ENCODE measurements at regions of chr6 and their contacts with region 1.

Region 1: DNA sequence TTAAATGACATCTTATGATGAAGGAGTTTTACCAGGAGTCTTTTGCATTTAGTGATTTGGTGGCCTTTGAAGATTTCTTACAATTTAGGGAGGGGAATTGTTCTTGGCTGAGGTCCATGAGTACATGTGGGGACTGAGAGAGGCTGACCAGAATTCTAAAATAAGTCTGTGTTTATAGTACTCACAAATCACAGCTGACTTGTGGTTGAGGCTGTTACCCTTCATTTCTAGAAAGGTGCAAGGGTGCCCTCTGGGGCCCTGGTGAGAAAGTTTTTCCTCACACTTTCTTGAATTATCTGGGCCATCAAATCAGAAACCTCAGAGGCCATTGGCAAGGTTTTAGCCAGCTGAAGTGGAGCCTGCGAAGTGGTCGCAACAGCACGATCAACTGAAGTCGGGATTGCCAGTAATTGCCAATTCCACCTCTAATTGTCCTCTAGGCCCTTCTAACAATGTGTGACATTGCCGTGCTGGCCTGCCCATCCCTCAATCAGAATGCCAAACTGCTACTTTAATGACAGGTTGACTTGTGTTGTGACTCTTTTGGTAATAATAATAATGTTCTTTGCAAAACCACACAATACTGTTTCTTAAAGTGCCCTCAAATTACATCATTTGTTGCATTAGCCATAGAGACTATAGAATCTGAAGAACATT is 221.6 kb downstream of the OGFRL1 start:
- DNase-seq: peak; percentile 40
- ATAC-seq: peak; percentile 81

Region 2: DNA sequence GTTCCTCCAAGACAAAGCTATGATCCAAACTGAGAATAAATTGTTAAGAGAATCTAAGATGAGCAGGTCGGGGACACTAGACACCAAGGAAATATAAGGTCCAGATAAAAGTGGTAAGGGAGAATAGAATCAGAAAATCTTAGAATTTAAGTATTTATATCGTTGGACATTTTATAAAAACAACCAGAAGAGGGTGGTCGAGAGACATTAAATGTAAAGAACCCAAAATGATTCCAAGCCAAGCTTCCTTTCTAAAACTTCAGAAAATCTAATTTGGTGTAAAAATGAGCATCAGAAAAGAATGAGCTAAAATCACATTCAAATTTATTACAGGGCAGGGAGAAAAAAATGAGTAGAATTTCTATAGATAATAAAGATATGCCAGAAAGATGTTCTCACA is 319.4 kb before region 1 on chr6:
- intact Hi-C with region 1: loop called (anchors 10 kb)
- DNase-seq: no peak
- ATAC-seq: no peak

Region 3: GRCh38 chr6:71388068-71388744 is 122.0 kb before region 1 on chr6:
- intact Hi-C with region 1: loop called (anchors 5 kb)
- DNase-seq: no peak
- ATAC-seq: no peak

Region 4: GRCh38 chr6:71621918-71622519 is 111.8 kb after region 1 on chr6:
- intact Hi-C with region 1: no loop called
- DNase-seq: no peak
- ATAC-seq: no peak

Measured in Right ventricle myocardium superior (tissue), 1 donor.